ENCODE measurements at regions of chr9 and their contacts with region 1.

Region 1: GRCh38 chr9:132973713-132974112 is 4.8 kb upstream of the GFI1B start:
- DNase-seq: peak; percentile 61 to 87 (median 72)
- ATAC-seq: peak; percentile 68
- H3K4me3 ChIP-seq: no peak overlapping the region
- H3K27ac ChIP-seq: no peak overlapping the region
- H3K4me1 ChIP-seq: peaks cover 12 to 29% of the 10 kb centered on the region in 2 experiments
- H3K27me3 ChIP-seq: no peaks in the 10 kb centered on the region
- CTCF ChIP-seq: no peak
- EP300 ChIP-seq: no peak
- POLR2A ChIP-seq: no peak
- RAD21 ChIP-seq: no peak

Region 2: DNA sequence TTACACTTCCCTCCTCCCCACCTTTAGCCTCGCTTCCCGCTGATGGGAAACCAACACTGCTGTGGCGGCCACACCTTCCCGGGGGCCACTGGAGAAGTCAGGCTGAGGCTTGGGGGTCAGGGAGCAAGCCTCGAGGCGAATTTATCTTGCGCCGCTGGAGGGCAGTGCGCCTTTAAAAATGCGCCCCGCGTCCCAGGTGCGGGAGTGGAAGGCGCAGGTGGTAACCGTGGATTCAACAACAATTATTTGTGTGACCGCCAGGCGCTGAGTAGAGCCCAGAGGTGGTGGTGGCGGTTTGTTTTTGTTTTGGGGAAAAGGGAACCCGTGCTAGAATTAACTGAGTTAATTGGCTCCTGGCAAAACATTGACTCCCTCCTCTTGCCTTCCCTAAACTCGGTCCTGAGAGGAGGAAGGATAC is 562.6 kb before region 1 on chr9:
- CTCF ChIA-PET with region 1: interaction called, 3 read pairs
- POLR2A ChIA-PET with region 1: no interaction called
- in situ Hi-C with region 1: loop called (anchors 10 kb)
- intact Hi-C with region 1: loop called (anchors 10 kb)
- DNase-seq: peak; percentile 71 to 77 (median 76)
- ATAC-seq: peak; percentile 87
- H3K4me3 ChIP-seq: no peak overlapping the region
- H3K27ac ChIP-seq: no peak overlapping the region
- H3K4me1 ChIP-seq: peaks cover 13 to 17% of the 10 kb centered on the region in 2 experiments; a peak in 4 of 5 replicates
- H3K27me3 ChIP-seq: peaks cover 23 to 31% of the 10 kb centered on the region in 2 experiments
- CTCF ChIP-seq: peak; percentile 85 to 93 (median 86)
- EP300 ChIP-seq: no peak
- POLR2A ChIP-seq: no peak
- RAD21 ChIP-seq: peak; percentile 75 to 86

Region 3: DNA sequence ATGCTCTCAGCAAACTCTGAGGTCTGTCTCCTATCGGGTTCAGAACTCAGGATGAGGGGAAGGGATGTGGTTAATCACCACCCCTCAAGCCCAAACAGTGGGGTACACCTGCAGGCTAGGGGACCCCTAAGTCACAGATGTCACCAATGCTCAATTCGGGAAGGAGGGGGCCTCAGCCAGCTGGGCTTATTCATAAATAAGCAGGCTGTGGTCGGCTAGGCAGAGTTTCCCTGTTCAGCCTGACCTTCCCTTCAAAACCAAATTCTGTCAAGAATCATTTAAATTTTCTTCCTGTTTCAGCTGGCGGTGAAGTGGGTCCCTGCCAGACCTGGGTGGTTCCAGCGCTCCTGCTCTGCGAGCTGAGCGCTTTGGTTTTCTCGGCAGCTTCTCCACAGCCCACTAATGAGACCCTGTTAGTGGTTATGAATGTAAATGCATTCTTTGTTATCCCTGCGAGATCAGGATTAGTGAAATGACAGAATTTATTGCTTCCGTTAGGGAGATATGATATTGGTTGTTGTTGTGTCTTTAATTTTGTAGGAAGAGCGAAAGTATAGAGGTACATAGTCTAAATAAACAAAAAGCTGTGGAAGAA is 163.9 kb before region 1 on chr9:
- CTCF ChIA-PET with region 1: interaction called, 4 read pairs
- POLR2A ChIA-PET with region 1: no interaction called
- in situ Hi-C with region 1: loop called (anchors 5 kb)
- intact Hi-C with region 1: no loop called
- DNase-seq: no peak
- ATAC-seq: no peak
- H3K4me3 ChIP-seq: no peak overlapping the region
- H3K27ac ChIP-seq: no peak overlapping the region
- H3K4me1 ChIP-seq: peaks cover 0 to 5% of the 10 kb centered on the region in 2 experiments; a peak in 1 of 5 replicates
- H3K27me3 ChIP-seq: peaks cover 58 to 83% of the 10 kb centered on the region in 2 experiments
- CTCF ChIP-seq: no peak
- EP300 ChIP-seq: no peak
- POLR2A ChIP-seq: no peak
- RAD21 ChIP-seq: no peak

Region 4: DNA sequence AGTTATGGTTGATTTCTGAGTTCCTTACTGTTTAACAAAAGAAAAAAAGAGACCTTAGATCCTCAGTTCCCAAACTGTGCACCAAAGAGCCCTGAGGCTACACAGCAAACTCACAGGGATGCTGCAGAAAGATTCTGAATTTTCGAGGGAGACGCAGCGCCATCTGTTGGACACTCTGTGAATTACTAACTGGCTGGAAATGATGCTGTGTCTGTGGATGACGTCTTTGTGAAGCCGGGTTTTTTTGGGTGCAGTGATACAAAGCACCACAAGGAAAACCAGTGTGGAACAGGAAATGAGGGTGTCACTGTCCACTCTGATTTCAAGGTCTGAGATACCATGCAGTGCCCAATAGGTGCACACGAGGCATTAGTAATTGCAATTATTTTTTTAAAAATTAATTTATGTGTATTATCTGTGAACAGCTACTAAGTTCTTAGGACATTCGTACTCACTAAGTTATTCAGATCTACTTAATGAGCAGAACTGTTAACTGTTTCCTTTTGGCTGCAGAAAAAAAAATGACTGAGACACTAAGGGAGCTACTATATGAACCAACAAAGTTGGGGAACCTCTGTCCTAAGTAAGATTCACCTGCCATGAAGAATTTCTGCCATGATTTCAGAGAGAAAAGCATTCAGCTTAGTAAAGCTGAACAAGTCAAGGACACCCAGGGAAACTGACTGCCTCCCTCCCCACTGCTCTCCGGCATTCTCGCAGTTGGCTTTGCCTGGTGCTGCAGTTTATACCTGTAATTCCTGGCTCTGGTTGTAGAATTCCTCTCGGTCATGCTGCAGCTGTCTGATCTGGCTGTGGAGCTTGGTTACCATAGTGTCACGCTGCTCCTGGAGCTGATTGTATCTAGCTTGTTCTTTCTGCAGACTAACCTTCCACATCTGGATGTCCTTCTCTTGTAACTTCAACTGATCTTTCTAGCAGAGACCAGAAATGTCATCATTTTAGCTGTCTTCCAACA is 71.6 kb before region 1 on chr9:
- CTCF ChIA-PET with region 1: no interaction called
- POLR2A ChIA-PET with region 1: no interaction called
- in situ Hi-C with region 1: no loop called
- intact Hi-C with region 1: loop called (anchors 10 kb)
- DNase-seq: peak; percentile 80 to 91 (median 87)
- ATAC-seq: peak; percentile 99
- H3K4me3 ChIP-seq: no peak overlapping the region
- H3K27ac ChIP-seq: no peak overlapping the region
- H3K4me1 ChIP-seq: no peaks in the 10 kb centered on the region
- H3K27me3 ChIP-seq: no peaks in the 10 kb centered on the region
- CTCF ChIP-seq: peak; percentile 92 to 95 (median 93)
- EP300 ChIP-seq: no peak
- POLR2A ChIP-seq: no peak
- RAD21 ChIP-seq: peak; percentile 37 to 68

Region 5: DNA sequence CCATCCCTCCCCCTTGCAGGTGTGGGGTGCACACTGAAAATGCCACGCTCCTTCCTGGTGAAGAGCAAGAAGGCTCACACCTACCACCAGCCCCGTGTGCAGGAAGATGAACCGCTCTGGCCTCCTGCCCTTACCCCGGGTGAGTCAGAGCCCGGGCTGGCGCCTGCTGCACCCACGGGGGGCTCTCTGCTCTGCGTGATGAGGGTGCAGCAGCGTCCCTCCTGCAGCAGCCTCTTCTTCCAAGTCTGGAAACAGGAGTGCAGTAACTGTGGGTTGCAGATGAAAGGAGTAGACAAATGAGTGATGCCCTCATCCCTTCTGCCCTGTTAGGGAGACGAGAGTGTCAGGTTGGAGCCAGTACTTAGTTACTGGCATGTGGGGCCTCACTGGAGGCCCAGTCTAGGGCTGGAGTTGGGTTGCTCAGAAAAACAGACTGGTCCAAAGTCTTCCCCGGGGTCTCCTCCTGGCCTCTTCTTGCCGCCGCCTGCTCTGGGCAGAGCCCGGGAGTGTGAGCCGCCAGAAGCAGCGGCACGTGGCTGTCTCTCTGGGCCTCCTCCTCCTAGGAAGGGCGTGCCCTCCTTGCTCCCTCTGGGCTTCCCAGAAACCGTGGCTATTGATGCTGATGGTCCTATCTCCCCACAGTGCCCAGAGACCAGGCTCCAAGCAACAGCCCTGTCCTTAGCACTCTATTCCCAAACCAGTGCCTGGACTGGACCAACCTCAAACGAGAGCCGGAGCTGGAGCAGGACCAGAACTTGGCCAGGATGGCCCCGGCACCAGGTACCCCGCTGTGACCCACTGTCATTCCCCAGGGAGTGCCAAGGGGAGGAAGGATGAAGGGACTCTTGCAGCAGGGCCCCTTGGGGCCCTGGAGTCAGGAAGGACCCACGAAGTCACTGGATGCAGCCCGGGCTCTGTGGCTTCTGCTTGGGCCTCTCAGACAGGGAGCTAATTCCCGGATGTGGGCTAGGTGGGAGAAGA is 13.2 kb after region 1 on chr9:
- CTCF ChIA-PET with region 1: no interaction called
- POLR2A ChIA-PET with region 1: no interaction called
- in situ Hi-C with region 1: no loop called
- intact Hi-C with region 1: no loop called
- DNase-seq: no peak
- ATAC-seq: no peak
- H3K4me3 ChIP-seq: no peak overlapping the region
- H3K27ac ChIP-seq: no peak overlapping the region
- H3K4me1 ChIP-seq: peaks cover 43 to 84% of the 10 kb centered on the region in 2 experiments
- H3K27me3 ChIP-seq: no peaks in the 10 kb centered on the region
- CTCF ChIP-seq: no peak
- EP300 ChIP-seq: no peak
- POLR2A ChIP-seq: no peak
- RAD21 ChIP-seq: no peak

Region 6: DNA sequence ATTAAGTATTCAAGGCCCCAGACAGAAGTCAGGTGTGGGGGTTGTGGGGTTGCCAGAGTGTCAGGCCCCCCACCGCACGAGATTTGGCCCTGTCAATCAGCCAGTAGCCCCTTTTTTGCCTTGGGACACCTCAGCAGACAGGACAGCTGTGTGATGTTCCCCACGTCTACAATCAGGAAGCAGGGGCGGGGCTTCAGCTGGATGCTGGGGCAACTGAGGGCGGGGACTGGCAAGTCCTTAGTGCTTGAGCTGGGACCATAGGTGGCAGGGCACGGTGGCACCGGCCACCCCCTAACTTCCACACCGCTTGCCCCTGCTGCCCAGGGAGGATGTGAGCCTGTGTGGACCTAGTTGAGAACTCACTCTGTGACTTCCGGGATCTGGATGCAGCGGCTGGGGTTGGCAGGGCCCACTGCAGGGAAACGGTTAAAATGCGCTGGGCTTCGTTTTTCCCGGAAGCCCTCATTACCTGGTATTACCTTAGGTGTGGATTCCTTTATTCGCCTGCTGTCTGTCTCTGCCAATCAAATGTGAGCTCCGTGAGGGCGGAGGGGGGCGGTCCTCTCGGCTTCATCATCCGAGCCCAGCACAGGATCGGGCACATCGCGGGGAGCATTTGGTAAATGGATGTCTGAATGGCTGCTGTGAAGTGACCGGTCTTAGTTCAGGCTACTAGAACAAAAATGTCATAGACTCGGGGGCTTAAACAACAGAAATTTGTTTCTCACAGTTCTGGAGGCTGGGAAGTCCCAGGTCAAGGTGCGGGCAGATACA is 49.6 kb after region 1 on chr9:
- CTCF ChIA-PET with region 1: interaction called, 13 read pairs
- POLR2A ChIA-PET with region 1: interaction called, 4 read pairs
- in situ Hi-C with region 1: no loop called
- intact Hi-C with region 1: loop called (anchors 1 kb)
- DNase-seq: no peak
- ATAC-seq: no peak
- H3K4me3 ChIP-seq: no peak overlapping the region
- H3K27ac ChIP-seq: no peak overlapping the region
- H3K4me1 ChIP-seq: peaks cover 27 to 36% of the 10 kb centered on the region in 2 experiments; a peak in 4 of 5 replicates
- H3K27me3 ChIP-seq: no peaks in the 10 kb centered on the region
- CTCF ChIP-seq: no peak
- EP300 ChIP-seq: no peak
- POLR2A ChIP-seq: no peak
- RAD21 ChIP-seq: no peak

Region 7: DNA sequence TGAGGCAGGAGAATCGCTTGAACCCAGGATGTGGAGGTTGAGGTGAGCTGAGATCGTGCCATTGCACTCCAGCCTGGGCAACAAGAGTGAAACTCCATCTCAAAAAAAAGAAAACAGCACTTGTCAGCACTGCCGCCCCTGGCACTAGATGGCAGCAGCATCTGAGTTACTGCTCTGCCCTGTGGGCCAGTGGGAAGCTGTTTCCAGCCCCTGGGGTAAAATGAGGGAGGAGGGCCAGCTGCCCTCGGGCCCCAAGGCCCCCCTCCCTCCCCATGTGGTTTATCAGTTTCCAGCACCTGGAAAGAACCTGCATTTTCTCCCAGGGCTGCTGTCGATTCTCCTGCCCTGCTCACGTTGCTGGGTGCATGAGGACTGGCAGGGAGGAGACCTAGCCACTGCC is 74.9 kb after region 1 on chr9:
- CTCF ChIA-PET with region 1: no interaction called
- POLR2A ChIA-PET with region 1: no interaction called
- in situ Hi-C with region 1: no loop called
- intact Hi-C with region 1: no loop called
- DNase-seq: peak; percentile 51 to 71 (median 62)
- ATAC-seq: peak; percentile 84
- H3K4me3 ChIP-seq: no peak overlapping the region
- H3K27ac ChIP-seq: no peak overlapping the region
- H3K4me1 ChIP-seq: peaks cover 0 to 9% of the 10 kb centered on the region in 2 experiments; a peak in 2 of 5 replicates
- H3K27me3 ChIP-seq: no peaks in the 10 kb centered on the region
- CTCF ChIP-seq: peak; percentile 24 to 52 (median 45); a peak in 4 of 6 replicates
- EP300 ChIP-seq: no peak
- POLR2A ChIP-seq: no peak
- RAD21 ChIP-seq: peak in 1 of 2 experiments; percentile 60; a peak in 3 of 4 replicates

Region 8: GRCh38 chr9:133149126-133150107 is 175.7 kb after region 1 on chr9:
- CTCF ChIA-PET with region 1: interaction called, 3 read pairs
- POLR2A ChIA-PET with region 1: interaction called, 3 read pairs
- in situ Hi-C with region 1: no loop called
- intact Hi-C with region 1: loop called (anchors 5 kb)
- DNase-seq: peak; percentile 95 to 98 (median 98)
- ATAC-seq: peak; percentile 86
- H3K4me3 ChIP-seq: peak overlapping the region; percentile 80
- H3K27ac ChIP-seq: peak overlapping the region; percentile 75
- H3K4me1 ChIP-seq: peaks cover 14 to 61% of the 10 kb centered on the region in 2 experiments
- H3K27me3 ChIP-seq: no peaks in the 10 kb centered on the region
- CTCF ChIP-seq: peak in 2 of 3 experiments; percentile 32 to 45; a peak in 4 of 6 replicates
- EP300 ChIP-seq: no peak
- POLR2A ChIP-seq: peak; percentile 84
- RAD21 ChIP-seq: no peak; a peak in 1 of 4 replicates